Head of caudate nucleus (tissue), 42 donors: ENCODE measurements at regions of chr17 and their contacts with region 1.

Region 1: GRCh38 chr17:45277216-45277849 is 15.4 kb upstream of the SPATA32 start:
- DNase-seq: peak; percentile 84 to 97 (median 92)

Region 2: DNA sequence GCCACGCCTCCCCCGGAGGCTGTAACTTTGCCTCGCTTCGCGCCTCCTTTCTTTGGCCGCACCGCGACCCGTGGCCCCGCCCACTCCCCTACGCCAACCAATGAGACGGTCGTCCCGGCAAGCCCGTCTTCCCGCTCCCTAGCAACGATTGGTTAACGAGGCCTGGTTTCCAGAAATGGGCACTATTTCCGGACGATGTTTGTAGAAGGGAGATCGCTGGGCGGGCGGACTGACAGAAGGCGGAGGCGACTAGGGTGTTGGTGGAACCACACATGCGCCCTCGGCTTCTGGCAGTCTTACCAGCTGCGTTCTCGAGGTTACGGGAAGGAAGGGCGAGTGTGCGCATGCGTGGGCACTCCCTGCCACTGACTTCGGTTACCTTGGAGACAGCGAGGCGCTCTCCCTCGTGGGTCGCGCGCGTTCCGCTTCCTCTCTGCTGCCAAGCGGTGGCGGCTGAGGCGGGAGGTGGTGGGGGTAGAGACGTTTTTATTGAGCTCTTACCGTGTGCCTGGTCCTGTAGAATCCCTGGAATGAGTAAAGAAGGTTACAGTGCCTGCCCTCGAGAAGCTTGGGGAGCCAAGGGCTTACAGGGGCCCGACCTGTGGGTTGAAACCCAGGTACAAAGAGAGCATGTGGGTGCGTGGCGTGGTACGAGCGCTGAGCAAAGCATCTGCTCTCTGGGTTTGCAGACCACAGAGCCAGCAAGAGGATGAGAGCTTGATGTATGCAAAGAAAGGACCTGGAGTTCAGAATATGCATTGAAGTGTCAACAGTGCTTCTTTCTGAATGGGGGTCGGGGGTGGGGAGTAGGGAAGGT is 40.0 kb after region 1 on chr17:
- intact Hi-C with region 1: loop called (anchors 5 kb)
- DNase-seq: peak; percentile 98 to 100 (median 99)

Region 3: GRCh38 chr17:45345554-45346215 is 68.4 kb after region 1 on chr17:
- intact Hi-C with region 1: no loop called
- DNase-seq: no peak

Region 4: GRCh38 chr17:45428050-45428617 is 150.8 kb after region 1 on chr17:
- intact Hi-C with region 1: no loop called
- DNase-seq: peak; percentile 55 to 89 (median 79)